Activated T-helper 2 cell treated with anti-CD3 and anti-CD28 coated beads, Interferon-gamma antibody, Interleukin-2, Interleukin-4, amounts not matched to agents 10 μg/mL and 5 μg/mL and 100 μg/mL, durations not matched to agents 14 hours and 24 hours and 36 hours (primary cell): ENCODE measurements at regions of chr2 and their contacts with region 1.

Region 1: DNA sequence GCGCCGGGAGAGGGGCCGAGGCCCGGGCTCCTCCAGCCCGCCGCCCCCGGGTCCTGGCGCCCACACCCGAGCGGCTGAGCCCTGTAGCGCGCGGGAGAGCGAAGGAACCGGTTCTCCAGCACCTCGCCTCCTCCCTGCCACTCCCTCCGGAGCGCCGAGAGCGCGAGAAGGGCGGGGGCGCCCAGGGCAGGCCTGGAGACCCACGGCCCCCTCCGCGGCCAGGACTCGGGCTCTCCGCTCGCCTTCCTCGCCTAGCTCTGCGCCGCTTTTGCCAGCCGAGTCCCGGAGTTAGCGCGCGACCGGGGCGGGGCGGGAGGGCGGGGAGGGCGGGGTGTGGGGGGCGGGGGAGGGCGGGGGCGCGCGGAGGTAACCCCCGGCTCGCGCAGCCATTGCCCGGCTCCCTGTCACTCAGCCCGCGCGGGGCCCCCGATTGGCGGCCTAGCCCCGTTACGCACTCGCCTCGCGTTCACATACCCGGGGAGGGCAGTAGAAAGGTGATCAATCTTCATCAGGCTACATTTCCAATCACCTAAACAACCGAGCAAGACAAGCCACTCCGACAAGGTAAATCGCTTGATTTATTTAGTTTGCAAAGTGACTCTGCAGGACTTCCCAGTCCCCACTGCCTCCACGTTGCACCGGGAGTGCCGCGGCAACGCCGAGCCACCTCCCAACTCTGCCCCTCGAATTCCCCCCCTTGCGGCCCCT is at the start of gene OTX1:
- DNase-seq: no peak
- H3K4me3 Mint-ChIP-seq: peak within 1 kb of the TSS; percentile 80
- H3K27ac Mint-ChIP-seq: peak within 1 kb of the TSS; percentile 45
- H3K4me1 Mint-ChIP-seq: peaks cover 23% of the 10 kb centered on the region
- H3K27me3 Mint-ChIP-seq: peaks cover 81% of the 10 kb centered on the region
- total RNA-seq, gene OTX1: not detected in 2 replicates

Region 2: GRCh38 chr2:62787386-62787785 is 263.1 kb before region 1 on chr2:
- intact Hi-C with region 1: loop called (anchors 2 kb)
- DNase-seq: no peak
- H3K4me3 Mint-ChIP-seq: no peak overlapping the region
- H3K27ac Mint-ChIP-seq: no peak overlapping the region
- H3K4me1 Mint-ChIP-seq: peaks cover 11% of the 10 kb centered on the region
- H3K27me3 Mint-ChIP-seq: no peaks in the 10 kb centered on the region